CD4-positive, alpha-beta T cell (primary cell): ENCODE measurements at regions of chr19 and their contacts with region 1.

Region 1: GRCh38 chr19:40378509-40378908 is 11.5 kb downstream of the HIPK4 start:
- DNase-seq: no peak
- ATAC-seq: no peak
- H3K4me3 ChIP-seq: no peak overlapping the region
- H3K4me3 Mint-ChIP-seq: no peak overlapping the region
- H3K27ac ChIP-seq: no peak overlapping the region
- H3K27ac Mint-ChIP-seq: no peak overlapping the region
- H3K4me1 ChIP-seq: peaks cover 4% of the 10 kb centered on the region
- H3K4me1 Mint-ChIP-seq: peaks cover 9% of the 10 kb centered on the region
- H3K27me3 ChIP-seq: no peaks in the 10 kb centered on the region
- H3K27me3 Mint-ChIP-seq: no peaks in the 10 kb centered on the region
- CTCF ChIP-seq: no peak

Region 2: GRCh38 chr19:40315812-40316475 is 62.6 kb before region 1 on chr19:
- CTCF ChIA-PET with region 1: no interaction called
- POLR2A ChIA-PET with region 1: no interaction called
- intact Hi-C with region 1: loop called in 1 of 2 experiments (anchors 5 kb)
- DNase-seq: no peak
- ATAC-seq: no peak
- H3K4me3 ChIP-seq: no peak overlapping the region
- H3K4me3 Mint-ChIP-seq: no peak overlapping the region
- H3K27ac ChIP-seq: no peak overlapping the region
- H3K27ac Mint-ChIP-seq: no peak overlapping the region
- H3K4me1 ChIP-seq: no peaks in the 10 kb centered on the region
- H3K4me1 Mint-ChIP-seq: no peaks in the 10 kb centered on the region
- H3K27me3 ChIP-seq: no peaks in the 10 kb centered on the region
- H3K27me3 Mint-ChIP-seq: no peaks in the 10 kb centered on the region
- CTCF ChIP-seq: no peak

Region 3: DNA sequence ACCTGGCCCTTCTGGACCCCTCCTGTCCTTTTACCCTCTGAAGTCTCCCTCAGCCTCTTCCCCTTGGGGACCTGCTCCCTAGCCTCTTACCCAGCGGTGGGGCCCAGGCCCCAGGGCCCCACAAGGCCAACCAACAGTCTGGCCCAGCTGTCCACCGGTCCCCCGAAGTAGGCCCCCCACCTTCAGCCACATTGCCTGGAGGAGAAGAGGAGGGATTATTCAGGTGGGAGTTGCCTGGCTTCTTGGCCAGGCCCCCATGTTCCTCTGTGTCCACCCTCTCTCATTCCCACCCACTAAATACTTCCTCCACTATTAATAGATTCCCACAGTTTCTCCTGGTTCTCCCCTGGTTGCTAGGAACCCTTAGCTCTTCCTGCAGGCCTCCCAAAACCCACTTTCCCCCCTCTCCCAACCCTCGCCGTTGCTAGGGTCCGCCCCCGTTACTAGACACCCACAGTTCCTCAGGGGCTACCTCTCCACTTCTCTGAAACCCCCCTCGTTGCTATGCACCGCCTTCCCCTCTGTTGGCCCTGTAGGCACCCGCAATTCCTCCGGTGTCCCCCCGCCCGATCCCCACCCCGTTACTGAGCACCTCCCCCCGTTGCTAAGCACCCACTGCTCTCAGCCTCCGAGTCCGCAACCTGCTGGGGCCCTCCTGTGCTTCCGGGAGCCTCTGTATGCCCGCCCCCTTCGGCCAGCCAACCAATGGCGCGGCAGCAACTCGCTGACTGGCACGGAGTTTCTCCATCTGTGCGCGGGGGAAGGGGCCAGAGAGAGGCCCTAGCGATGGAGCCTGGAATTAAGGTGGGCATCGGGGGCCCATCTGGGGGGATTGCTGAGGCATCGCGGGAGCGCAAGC is 336.2 kb after region 1 on chr19:
- CTCF ChIA-PET with region 1: no interaction called
- POLR2A ChIA-PET with region 1: no interaction called
- intact Hi-C with region 1: no loop called
- DNase-seq: peak; percentile 86 to 97 (median 93)
- ATAC-seq: peak; percentile 75
- H3K4me3 ChIP-seq: peak overlapping the region; percentile 89
- H3K4me3 Mint-ChIP-seq: peak overlapping the region; percentile 95
- H3K27ac ChIP-seq: peak overlapping the region; percentile 89 to 96
- H3K27ac Mint-ChIP-seq: peak overlapping the region; percentile 94
- H3K4me1 ChIP-seq: peaks cover 56% of the 10 kb centered on the region
- H3K4me1 Mint-ChIP-seq: peaks cover 65% of the 10 kb centered on the region
- H3K27me3 ChIP-seq: no peaks in the 10 kb centered on the region
- H3K27me3 Mint-ChIP-seq: no peaks in the 10 kb centered on the region
- CTCF ChIP-seq: no peak